Activated T-helper 2 cell treated with anti-CD3 and anti-CD28 coated beads, Interferon-gamma antibody, Interleukin-2, Interleukin-4, amounts not matched to agents 10 μg/mL and 5 μg/mL and 100 μg/mL, durations not matched to agents 14 hours and 24 hours and 36 hours (primary cell): ENCODE measurements at regions of chr14 and their contacts with region 1.

Region 1: GRCh38 chr14:34322940-34323418 is 139.1 kb downstream of the SPTSSA start:
- DNase-seq: peak; percentile 35
- H3K4me3 Mint-ChIP-seq: no peak overlapping the region
- H3K27ac Mint-ChIP-seq: no peak overlapping the region
- H3K4me1 Mint-ChIP-seq: peaks cover 2% of the 10 kb centered on the region
- H3K27me3 Mint-ChIP-seq: peaks cover 3% of the 10 kb centered on the region

Region 2: DNA sequence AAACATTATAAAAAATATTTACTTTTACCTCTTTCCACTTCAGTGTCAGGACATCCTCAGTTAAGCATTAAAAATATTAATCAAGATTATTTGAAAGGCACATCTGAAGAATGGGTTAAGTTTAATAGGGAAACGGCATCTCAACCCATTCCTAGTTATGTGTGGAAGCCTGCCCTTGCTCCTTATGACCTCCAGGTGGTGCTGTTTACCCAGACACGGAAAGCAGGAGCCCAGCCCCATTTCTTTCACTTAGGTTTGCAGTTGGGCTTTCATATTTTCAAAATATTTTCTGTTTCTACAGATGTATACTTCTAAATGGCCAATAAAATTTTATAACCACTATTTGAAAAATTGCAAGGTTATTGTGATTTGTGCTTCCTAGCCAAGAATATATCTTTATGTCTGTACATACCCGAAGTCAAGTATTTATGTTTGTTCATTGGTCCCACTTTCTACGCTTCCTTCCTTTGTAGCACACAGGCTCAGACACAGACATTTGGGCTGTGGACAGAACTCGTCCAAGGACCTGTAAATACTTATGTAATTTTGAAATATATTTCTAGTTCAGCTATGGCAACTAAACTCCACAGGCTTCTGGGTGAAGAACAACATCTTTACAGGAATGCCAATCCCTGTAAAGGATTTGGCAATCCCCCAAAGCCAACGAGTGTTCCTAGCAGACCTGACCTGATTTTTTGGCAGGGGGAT is 1746.7 kb before region 1 on chr14:
- intact Hi-C with region 1: loop called (anchors 1 kb)
- DNase-seq: peak; percentile 13
- H3K4me3 Mint-ChIP-seq: no peak overlapping the region
- H3K27ac Mint-ChIP-seq: no peak overlapping the region
- H3K4me1 Mint-ChIP-seq: no peaks in the 10 kb centered on the region
- H3K27me3 Mint-ChIP-seq: peaks cover 20% of the 10 kb centered on the region

Region 3: DNA sequence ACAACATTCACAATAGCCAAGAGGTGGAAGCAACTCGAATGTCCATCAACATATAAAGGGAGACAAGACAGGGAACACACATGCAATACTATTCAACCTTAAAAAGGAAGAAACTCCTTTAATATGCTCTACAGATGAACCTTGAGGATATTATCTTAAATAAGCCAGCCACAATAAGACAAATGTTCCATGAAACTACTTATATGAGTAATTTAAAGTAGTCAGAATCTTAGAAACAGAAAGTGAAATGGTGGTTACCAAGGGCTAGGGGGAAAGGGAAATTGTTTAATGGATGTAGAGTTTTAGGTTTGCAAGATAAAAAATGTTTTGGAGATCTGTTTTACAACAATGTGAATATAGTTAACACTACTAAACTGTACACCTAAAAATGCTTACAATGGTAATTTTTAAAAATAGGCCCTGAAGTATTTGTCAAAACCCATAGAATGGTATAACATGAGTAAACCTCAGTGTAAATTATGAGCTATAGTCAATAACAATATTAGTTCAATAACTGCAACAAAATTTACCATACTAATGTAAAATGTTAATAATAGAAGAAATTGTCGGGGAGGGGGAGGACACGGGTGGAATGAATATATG is 443.2 kb before region 1 on chr14:
- intact Hi-C with region 1: no loop called
- DNase-seq: no peak
- H3K4me3 Mint-ChIP-seq: no peak overlapping the region
- H3K27ac Mint-ChIP-seq: no peak overlapping the region
- H3K4me1 Mint-ChIP-seq: peaks cover 15% of the 10 kb centered on the region
- H3K27me3 Mint-ChIP-seq: peaks cover 6% of the 10 kb centered on the region